Activated naive CD4-positive, alpha-beta T cell treated with anti-CD3 and anti-CD28 coated beads, Interleukin-2, amount 10 ng/mL, durations not matched to agents 7 days and 5 days (primary cell): ENCODE measurements at regions of chr17 and their contacts with region 1.

Region 1: GRCh38 chr17:79387783-79388182 is 223.1 kb downstream of the RBFOX3 start:
- DNase-seq: no peak
- H3K4me3 Mint-ChIP-seq: no peak overlapping the region
- H3K27ac Mint-ChIP-seq: no peak overlapping the region
- H3K4me1 Mint-ChIP-seq: no peaks in the 10 kb centered on the region
- H3K27me3 Mint-ChIP-seq: peaks cover 46% of the 10 kb centered on the region

Region 2: GRCh38 chr17:79400989-79401703 is 13.4 kb after region 1 on chr17:
- CTCF ChIA-PET with region 1: interaction called, 30 read pairs
- DNase-seq: peak; percentile 78
- H3K4me3 Mint-ChIP-seq: peak overlapping the region; percentile 37
- H3K27ac Mint-ChIP-seq: no peak overlapping the region
- H3K4me1 Mint-ChIP-seq: peaks cover 13% of the 10 kb centered on the region
- H3K27me3 Mint-ChIP-seq: peaks cover 81% of the 10 kb centered on the region